B cell (primary cell): ENCODE measurements at regions of chr7 and their contacts with region 1.

Region 1: DNA sequence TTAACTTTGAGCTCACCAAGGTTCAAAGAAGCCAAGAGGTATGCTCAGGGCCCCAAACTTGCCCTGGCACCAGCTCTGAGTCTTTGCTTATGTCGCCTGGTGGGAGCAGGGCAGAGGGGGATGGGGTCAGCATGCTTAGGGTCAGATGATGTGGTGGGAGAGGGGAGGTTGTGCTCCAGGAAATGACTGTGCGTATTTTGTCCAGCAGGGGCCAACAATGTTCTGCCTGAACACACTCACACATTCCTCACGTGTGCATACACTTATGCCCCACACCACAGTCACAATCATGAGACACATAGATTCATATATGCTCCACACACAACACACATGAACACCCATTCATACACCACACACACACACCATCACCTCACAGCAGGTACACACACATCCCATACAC is 4.4 kb upstream of the RAMP3 start:
- DNase-seq: no peak
- ATAC-seq: no peak
- H3K4me3 ChIP-seq: no peak overlapping the region
- H3K4me3 Mint-ChIP-seq: no peak overlapping the region
- H3K27ac ChIP-seq: no peak overlapping the region
- H3K27ac Mint-ChIP-seq: no peak overlapping the region
- H3K4me1 ChIP-seq: peaks cover 9 to 17% of the 10 kb centered on the region in 2 donors
- H3K4me1 Mint-ChIP-seq: peaks cover 9% of the 10 kb centered on the region
- H3K27me3 ChIP-seq: peaks cover 0 to 30% (median 8%) of the 10 kb centered on the region in 4 experiments
- H3K27me3 Mint-ChIP-seq: peaks cover 34% of the 10 kb centered on the region
- CTCF ChIP-seq: no peak

Region 2: GRCh38 chr7:45259966-45260646 is 106.9 kb after region 1 on chr7:
- CTCF ChIA-PET with region 1: interaction called, 10 read pairs
- POLR2A ChIA-PET with region 1: no interaction called
- intact Hi-C with region 1: no loop called
- DNase-seq: peak; percentile 63
- ATAC-seq: peak; percentile 58
- H3K4me3 ChIP-seq: no peak overlapping the region
- H3K4me3 Mint-ChIP-seq: no peak overlapping the region
- H3K27ac ChIP-seq: no peak overlapping the region
- H3K27ac Mint-ChIP-seq: no peak overlapping the region
- H3K4me1 ChIP-seq: peaks cover 10 to 21% of the 10 kb centered on the region in 2 donors
- H3K4me1 Mint-ChIP-seq: peaks cover 24% of the 10 kb centered on the region
- H3K27me3 ChIP-seq: peaks cover 0 to 23% (median 13%) of the 10 kb centered on the region in 4 experiments
- H3K27me3 Mint-ChIP-seq: peaks cover 47% of the 10 kb centered on the region
- CTCF ChIP-seq: peak; percentile 87

Region 3: DNA sequence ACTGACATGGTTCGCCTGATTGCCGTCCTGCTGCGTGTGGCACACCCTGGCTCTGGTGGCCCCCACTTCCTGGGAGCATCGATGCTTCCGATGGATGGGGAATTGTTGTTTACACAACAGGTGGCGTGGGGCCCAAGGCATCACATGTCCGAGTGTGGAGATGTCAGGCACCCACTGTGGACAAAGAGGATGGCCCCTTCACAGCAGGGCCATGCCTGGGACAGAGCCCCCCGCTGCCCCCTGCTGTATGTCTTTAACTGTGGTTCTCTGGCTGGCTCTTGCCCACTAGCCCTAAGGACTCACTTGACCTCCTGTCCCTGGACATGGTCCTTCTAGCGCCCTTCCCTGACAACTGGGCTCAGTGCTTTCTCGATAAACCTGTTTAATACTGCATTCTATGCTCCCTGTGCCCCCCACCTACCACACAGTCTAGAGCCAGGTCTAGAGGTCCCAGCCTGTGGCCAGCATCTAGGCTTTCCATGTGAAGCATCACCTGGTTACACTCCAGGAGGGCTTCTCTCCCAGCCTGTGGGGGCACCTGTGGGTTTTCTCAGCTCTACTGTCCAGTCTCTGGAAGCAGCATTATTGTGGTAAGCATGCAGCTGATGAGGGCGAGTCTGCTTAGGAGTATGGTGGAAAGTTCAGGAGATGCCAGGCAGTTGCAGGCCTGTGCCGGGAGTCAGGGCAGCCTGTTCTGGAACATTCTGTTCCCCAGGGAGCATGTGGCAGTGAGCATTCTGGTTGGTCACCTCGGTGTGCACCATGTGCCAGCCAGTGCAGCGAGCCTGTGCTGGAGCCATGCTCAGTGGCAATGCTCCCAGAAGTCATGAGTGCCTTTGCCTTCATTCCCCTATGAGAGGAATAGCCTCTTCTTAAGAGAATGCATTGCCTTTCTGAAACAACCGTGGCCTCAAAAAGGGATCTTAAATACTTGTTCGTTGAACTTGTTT is 431.3 kb after region 1 on chr7:
- CTCF ChIA-PET with region 1: no interaction called
- POLR2A ChIA-PET with region 1: no interaction called
- intact Hi-C with region 1: no loop called
- DNase-seq: no peak
- ATAC-seq: no peak
- H3K4me3 ChIP-seq: no peak overlapping the region
- H3K4me3 Mint-ChIP-seq: no peak overlapping the region
- H3K27ac ChIP-seq: no peak overlapping the region
- H3K27ac Mint-ChIP-seq: no peak overlapping the region
- H3K4me1 ChIP-seq: no peaks in the 10 kb centered on the region
- H3K4me1 Mint-ChIP-seq: no peaks in the 10 kb centered on the region
- H3K27me3 ChIP-seq: no peaks in the 10 kb centered on the region
- H3K27me3 Mint-ChIP-seq: no peaks in the 10 kb centered on the region
- CTCF ChIP-seq: no peak